ENCODE measurements at regions of chr3 and their contacts with region 1.

Region 1: DNA sequence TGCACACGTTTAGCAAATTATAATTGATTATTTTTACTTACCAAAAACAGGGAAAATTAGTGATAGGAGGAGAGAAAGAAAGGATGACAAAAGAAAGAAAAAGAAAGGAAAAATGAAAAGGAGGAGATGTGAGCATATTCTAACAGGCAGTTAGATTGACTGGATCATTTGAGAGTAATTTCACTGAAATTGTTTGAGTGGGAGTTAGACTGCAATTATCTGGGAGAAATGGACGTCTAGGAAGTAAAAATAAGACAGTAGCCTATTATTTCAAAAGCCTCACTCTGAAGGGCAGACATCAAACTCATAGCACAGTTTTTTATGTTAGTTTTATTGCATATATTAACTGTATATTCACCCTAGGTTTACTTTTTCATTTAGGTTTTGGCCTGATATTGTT is 272.8 kb upstream of the POU1F1 start:
- DNase-seq: peak; percentile 82
- H3K4me3 ChIP-seq: no peak overlapping the region
- H3K27ac ChIP-seq: peak overlapping the region; percentile 99
- H3K4me1 ChIP-seq: peaks cover 57% of the 10 kb centered on the region
- H3K27me3 ChIP-seq: no peaks in the 10 kb centered on the region
- CTCF ChIP-seq: no peak

Region 2: DNA sequence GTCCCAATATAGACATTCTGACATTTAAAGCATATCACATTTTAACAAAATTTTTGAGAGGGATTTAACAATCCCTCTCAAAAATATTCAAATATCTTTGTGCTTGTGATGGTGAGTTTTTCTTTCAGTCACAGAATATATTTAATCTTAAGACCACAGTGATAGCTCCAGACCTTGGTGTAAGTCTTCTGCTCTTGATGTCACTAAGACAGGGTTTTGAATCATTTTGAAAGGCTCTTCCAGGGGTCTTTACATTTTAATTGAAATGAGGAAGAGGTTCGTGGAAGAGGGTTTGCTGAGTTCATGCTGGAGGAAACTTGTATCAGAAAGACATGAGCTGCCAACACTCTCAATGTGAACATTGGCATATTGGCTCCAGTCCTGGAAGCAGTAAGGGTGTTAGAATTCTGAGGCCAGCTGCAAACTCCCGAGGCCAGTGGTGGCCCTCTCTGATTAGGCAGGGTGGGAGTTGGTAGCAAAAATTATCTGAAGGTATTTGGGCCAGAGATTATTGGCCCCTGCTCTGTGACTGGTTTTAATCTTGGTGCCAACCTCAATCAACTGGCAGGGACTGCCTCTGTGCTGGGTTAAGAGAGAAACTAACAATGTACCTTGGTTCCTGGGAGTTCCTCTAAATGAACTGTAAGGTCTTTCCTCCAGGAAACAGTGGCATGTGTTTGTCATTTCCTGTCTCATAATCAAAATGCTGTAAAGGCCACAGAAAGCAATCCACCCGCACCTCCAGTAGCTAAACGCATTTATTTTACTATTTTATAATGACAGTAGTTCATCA is 278.1 kb before region 1 on chr3:
- CTCF ChIA-PET with region 1: no interaction called
- POLR2A ChIA-PET with region 1: no interaction called
- intact Hi-C with region 1: loop called (anchors 2 kb)
- DNase-seq: peak; percentile 89
- H3K4me3 ChIP-seq: peak overlapping the region; percentile 50
- H3K27ac ChIP-seq: peak overlapping the region; percentile 92
- H3K4me1 ChIP-seq: peaks cover 61% of the 10 kb centered on the region
- H3K27me3 ChIP-seq: no peaks in the 10 kb centered on the region
- CTCF ChIP-seq: no peak

Region 3: DNA sequence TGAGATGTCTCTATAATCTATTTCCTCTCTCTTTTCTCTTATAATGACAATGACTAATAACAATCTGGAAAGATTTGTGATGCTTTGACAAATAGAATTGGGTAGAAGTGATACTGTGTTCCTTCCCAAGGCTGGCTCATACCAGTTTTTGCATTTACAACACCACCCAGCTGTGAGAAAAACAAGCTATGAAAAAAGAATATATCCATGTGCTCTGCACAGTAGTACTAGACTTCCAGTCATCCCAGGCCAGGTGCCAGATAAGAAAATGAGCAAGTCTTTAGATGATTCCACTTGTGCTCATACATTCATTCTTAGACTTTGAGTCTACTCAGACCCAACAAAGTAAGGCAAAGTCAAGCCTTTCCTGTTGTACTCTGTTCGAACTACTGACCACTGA is 77.3 kb after region 1 on chr3:
- CTCF ChIA-PET with region 1: no interaction called
- POLR2A ChIA-PET with region 1: no interaction called
- intact Hi-C with region 1: loop called (anchors 2 kb)
- DNase-seq: peak; percentile 91
- H3K4me3 ChIP-seq: no peak overlapping the region
- H3K27ac ChIP-seq: peak overlapping the region; percentile 74
- H3K4me1 ChIP-seq: peaks cover 32% of the 10 kb centered on the region
- H3K27me3 ChIP-seq: no peaks in the 10 kb centered on the region
- CTCF ChIP-seq: no peak